Naive thymus-derived CD4-positive, alpha-beta T cell (primary cell): ENCODE measurements at regions of chr16 and their contacts with region 1.

Region 1: GRCh38 chr16:29805378-29806098 is 791 bp upstream of the MAZ start:
- DNase-seq: peak; percentile 96 to 98 (median 98)
- ATAC-seq: peak; percentile 86
- H3K4me3 ChIP-seq: peak overlapping the region; percentile 87
- H3K4me3 Mint-ChIP-seq: peak overlapping the region; percentile 88 to 100 (median 98)
- H3K27ac ChIP-seq: peak overlapping the region; percentile 95
- H3K27ac Mint-ChIP-seq: peak overlapping the region; percentile 95 to 100 (median 99)
- H3K4me1 ChIP-seq: peaks cover 34 to 39% of the 10 kb centered on the region in 2 donors
- H3K4me1 Mint-ChIP-seq: peaks cover 28 to 49% (median 41%) of the 10 kb centered on the region in 7 donors
- H3K27me3 ChIP-seq: no peaks in the 10 kb centered on the region
- H3K27me3 Mint-ChIP-seq: peaks cover 0 to 2% (median 0%) of the 10 kb centered on the region in 5 donors

Region 2: GRCh38 chr16:29738514-29738913 is 67.0 kb before region 1 on chr16:
- CTCF ChIA-PET with region 1: interaction called, 4 read pairs
- POLR2A ChIA-PET with region 1: interaction called, 30 read pairs
- intact Hi-C with region 1: loop called in 1 of 2 experiments (anchors 1 kb)
- DNase-seq: peak in 7 of 9 donors; percentile 66 to 86 (median 82)
- ATAC-seq: peak; percentile 90
- H3K4me3 ChIP-seq: peak overlapping the region; percentile 18
- H3K4me3 Mint-ChIP-seq: peak overlapping the region; percentile 50 to 96 (median 64)
- H3K27ac ChIP-seq: peak overlapping the region; percentile 80
- H3K27ac Mint-ChIP-seq: peak overlapping the region; percentile 82 to 99 (median 91)
- H3K4me1 ChIP-seq: peaks cover 69 to 70% of the 10 kb centered on the region in 2 donors
- H3K4me1 Mint-ChIP-seq: peaks cover 63 to 91% (median 84%) of the 10 kb centered on the region in 7 donors
- H3K27me3 ChIP-seq: no peaks in the 10 kb centered on the region
- H3K27me3 Mint-ChIP-seq: no peaks in the 10 kb centered on the region

Region 3: GRCh38 chr16:29784901-29785500 is 20.5 kb before region 1 on chr16:
- CTCF ChIA-PET with region 1: interaction called, 28 read pairs
- POLR2A ChIA-PET with region 1: interaction called, 158 read pairs
- intact Hi-C with region 1: loop called (anchors 1 kb)
- DNase-seq: peak; percentile 59 to 77 (median 68)
- ATAC-seq: peak; percentile 95
- H3K4me3 ChIP-seq: peak overlapping the region; percentile 36
- H3K4me3 Mint-ChIP-seq: peak overlapping the region; percentile 56 to 80 (median 72)
- H3K27ac ChIP-seq: peak overlapping the region; percentile 44
- H3K27ac Mint-ChIP-seq: peak overlapping the region; percentile 58 to 95 (median 80)
- H3K4me1 ChIP-seq: peaks cover 12 to 15% of the 10 kb centered on the region in 2 donors
- H3K4me1 Mint-ChIP-seq: peaks cover 12 to 44% (median 28%) of the 10 kb centered on the region in 7 donors
- H3K27me3 ChIP-seq: no peaks in the 10 kb centered on the region
- H3K27me3 Mint-ChIP-seq: peaks cover 0 to under 1% (median 0%) of the 10 kb centered on the region in 5 donors

Region 4: DNA sequence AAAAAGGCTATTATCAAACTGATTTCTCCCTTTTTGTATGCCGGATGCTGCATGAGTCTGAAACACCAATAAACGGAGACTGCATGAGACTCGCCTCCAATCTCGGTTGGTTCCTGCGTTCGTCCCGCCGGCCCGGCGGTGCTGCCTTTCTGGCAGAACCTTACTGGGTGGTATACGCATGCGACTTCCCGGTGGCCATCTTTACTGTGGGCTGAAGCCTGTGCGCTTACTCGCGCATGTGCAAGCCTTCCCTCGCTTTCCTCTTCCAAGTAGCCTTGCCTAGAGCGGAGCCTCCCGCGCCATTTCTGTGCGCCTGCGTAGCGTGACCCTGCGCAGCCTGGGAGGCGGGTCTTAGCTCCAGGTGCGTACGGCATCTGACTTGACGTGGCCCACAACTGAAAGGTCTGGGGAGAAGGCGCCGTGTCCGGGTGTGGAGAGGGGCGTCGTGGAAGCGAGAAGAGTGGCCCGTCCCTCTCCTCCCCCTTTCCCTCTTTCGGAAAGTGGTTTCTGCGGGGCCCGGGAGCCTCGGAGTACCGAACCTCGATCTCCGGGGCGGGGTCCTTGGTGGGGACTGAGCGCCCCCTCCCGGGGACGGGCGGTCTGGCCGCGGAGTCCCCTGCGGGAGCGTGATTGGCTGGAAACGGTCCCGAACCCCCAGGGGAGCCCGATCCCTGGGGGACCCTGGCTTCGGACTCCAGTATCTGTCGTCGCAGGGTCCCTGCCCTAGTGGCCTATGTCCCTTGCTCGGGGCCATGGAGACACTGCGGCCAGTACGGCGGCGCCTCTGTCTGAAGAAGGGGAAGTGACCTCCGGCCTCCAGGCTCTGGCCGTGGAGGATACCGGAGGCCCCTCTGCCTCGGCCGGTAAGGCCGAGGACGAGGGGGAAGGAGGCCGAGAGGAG is 10.5 kb after region 1 on chr16 and contains the start of gene PAGR1:
- CTCF ChIA-PET with region 1: interaction called, 28 read pairs
- POLR2A ChIA-PET with region 1: interaction called, 109 read pairs
- intact Hi-C with region 1: loop called (anchors 1 kb)
- DNase-seq: peak; percentile 92 to 99 (median 99)
- ATAC-seq: peak; percentile 87
- H3K4me3 ChIP-seq: peak within 1 kb of the TSS; percentile 99
- H3K4me3 Mint-ChIP-seq: peak within 1 kb of the TSS; percentile 85 to 100 (median 96)
- H3K27ac ChIP-seq: peak within 1 kb of the TSS; percentile 92
- H3K27ac Mint-ChIP-seq: peak within 1 kb of the TSS; percentile 95 to 99 (median 99)
- H3K4me1 ChIP-seq: peaks cover 29 to 41% of the 10 kb centered on the region in 2 donors
- H3K4me1 Mint-ChIP-seq: peaks cover 40 to 75% (median 59%) of the 10 kb centered on the region in 7 donors
- H3K27me3 ChIP-seq: no peaks in the 10 kb centered on the region
- H3K27me3 Mint-ChIP-seq: peaks cover 0 to 22% (median 0%) of the 10 kb centered on the region in 5 donors
- total RNA-seq, gene PAGR1: 17.5 to 42.0 (median 25.7) TPM

Region 5: GRCh38 chr16:29842732-29843346 is 37.3 kb after region 1 on chr16:
- CTCF ChIA-PET with region 1: interaction called, 53 read pairs
- POLR2A ChIA-PET with region 1: interaction called, 63 read pairs
- intact Hi-C with region 1: loop called (anchors 1 kb)
- DNase-seq: no peak
- ATAC-seq: no peak
- H3K4me3 ChIP-seq: no peak overlapping the region
- H3K4me3 Mint-ChIP-seq: no peak overlapping the region
- H3K27ac ChIP-seq: no peak overlapping the region
- H3K27ac Mint-ChIP-seq: peak overlapping the region; percentile 5 to 78 (median 53)
- H3K4me1 ChIP-seq: no peaks in the 10 kb centered on the region
- H3K4me1 Mint-ChIP-seq: peaks cover 0 to 8% (median 3%) of the 10 kb centered on the region in 7 donors
- H3K27me3 ChIP-seq: no peaks in the 10 kb centered on the region
- H3K27me3 Mint-ChIP-seq: no peaks in the 10 kb centered on the region

Region 6: GRCh38 chr16:29973384-29974246 is 168.1 kb after region 1 on chr16 and contains the start of gene TAOK2:
- CTCF ChIA-PET with region 1: interaction called, 3 read pairs
- POLR2A ChIA-PET with region 1: interaction called, 9 read pairs
- intact Hi-C with region 1: loop called (anchors 1 to 5 kb)
- DNase-seq: peak; percentile 83 to 98 (median 89)
- ATAC-seq: peak; percentile 97
- H3K4me3 ChIP-seq: peak within 1 kb of the TSS; percentile 98
- H3K4me3 Mint-ChIP-seq: peak within 1 kb of the TSS; percentile 80 to 97 (median 94)
- H3K27ac ChIP-seq: peak within 1 kb of the TSS; percentile 78
- H3K27ac Mint-ChIP-seq: peak within 1 kb of the TSS; percentile 77 to 93 (median 91)
- H3K4me1 ChIP-seq: peaks cover 20 to 23% of the 10 kb centered on the region in 2 donors
- H3K4me1 Mint-ChIP-seq: peaks cover 23 to 39% (median 37%) of the 10 kb centered on the region in 7 donors
- H3K27me3 ChIP-seq: no peaks in the 10 kb centered on the region
- H3K27me3 Mint-ChIP-seq: no peaks in the 10 kb centered on the region
- total RNA-seq, gene TAOK2: 19.4 to 48.5 (median 42.9) TPM

Region 7: GRCh38 chr16:30417529-30418349 is 612.2 kb after region 1 on chr16:
- CTCF ChIA-PET with region 1: no interaction called
- POLR2A ChIA-PET with region 1: no interaction called
- intact Hi-C with region 1: loop called in 1 of 2 experiments (anchors 10 kb)
- DNase-seq: peak; percentile 79 to 93 (median 88)
- ATAC-seq: peak; percentile 95
- H3K4me3 ChIP-seq: peak overlapping the region; percentile 76
- H3K4me3 Mint-ChIP-seq: peak overlapping the region; percentile 54 to 80 (median 70)
- H3K27ac ChIP-seq: peak overlapping the region; percentile 85
- H3K27ac Mint-ChIP-seq: peak overlapping the region in 7 of 9 donors; percentile 69 to 88 (median 81)
- H3K4me1 ChIP-seq: peaks cover 6 to 8% of the 10 kb centered on the region in 2 donors
- H3K4me1 Mint-ChIP-seq: peaks cover 12 to 31% (median 14%) of the 10 kb centered on the region in 7 donors
- H3K27me3 ChIP-seq: no peaks in the 10 kb centered on the region
- H3K27me3 Mint-ChIP-seq: no peaks in the 10 kb centered on the region

Region 8: GRCh38 chr16:30665161-30665829 is 859.8 kb after region 1 on chr16:
- CTCF ChIA-PET with region 1: no interaction called
- POLR2A ChIA-PET with region 1: no interaction called
- intact Hi-C with region 1: no loop called
- DNase-seq: no peak
- ATAC-seq: no peak
- H3K4me3 ChIP-seq: no peak overlapping the region
- H3K4me3 Mint-ChIP-seq: peak overlapping the region in 1 of 10 donors; percentile 18
- H3K27ac ChIP-seq: no peak overlapping the region
- H3K27ac Mint-ChIP-seq: peak overlapping the region in 3 of 9 donors; percentile 47 to 62 (median 51)
- H3K4me1 ChIP-seq: peaks cover 32 to 38% of the 10 kb centered on the region in 2 donors
- H3K4me1 Mint-ChIP-seq: peaks cover 33 to 40% (median 34%) of the 10 kb centered on the region in 7 donors
- H3K27me3 ChIP-seq: no peaks in the 10 kb centered on the region
- H3K27me3 Mint-ChIP-seq: no peaks in the 10 kb centered on the region

Region 9: GRCh38 chr16:30688675-30689074 is 883.1 kb after region 1 on chr16:
- CTCF ChIA-PET with region 1: no interaction called
- POLR2A ChIA-PET with region 1: no interaction called
- intact Hi-C with region 1: no loop called
- DNase-seq: no peak
- ATAC-seq: no peak
- H3K4me3 ChIP-seq: no peak overlapping the region
- H3K4me3 Mint-ChIP-seq: no peak overlapping the region
- H3K27ac ChIP-seq: no peak overlapping the region
- H3K27ac Mint-ChIP-seq: no peak overlapping the region
- H3K4me1 ChIP-seq: peaks cover 0 to 5% of the 10 kb centered on the region in 2 donors
- H3K4me1 Mint-ChIP-seq: peaks cover 6 to 13% (median 9%) of the 10 kb centered on the region in 7 donors
- H3K27me3 ChIP-seq: no peaks in the 10 kb centered on the region
- H3K27me3 Mint-ChIP-seq: peaks cover 0 to 2% (median 0%) of the 10 kb centered on the region in 5 donors